Heart right ventricle (tissue), 16 donors: ENCODE measurements at regions of chr18 and their contacts with region 1.

Region 1: DNA sequence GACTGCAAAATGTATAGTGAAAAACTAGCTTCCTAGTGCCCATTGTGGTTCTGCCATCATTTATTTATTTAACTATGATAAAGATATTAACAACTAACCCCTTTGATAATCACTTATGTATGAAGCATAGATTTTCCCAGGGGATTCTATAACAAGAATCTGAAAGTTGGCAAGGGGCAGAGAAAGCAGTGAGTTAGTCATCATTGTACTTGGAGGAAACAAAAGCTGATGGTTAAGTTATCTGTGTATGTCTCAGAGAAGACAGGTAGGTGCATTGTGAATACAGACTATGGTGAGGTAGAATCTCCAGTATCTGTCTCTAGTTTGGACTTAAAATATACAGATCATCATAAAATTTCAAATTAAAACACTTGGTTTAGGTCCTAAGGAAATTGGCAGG is 2159.1 kb upstream of the CELF4 start:
- DNase-seq: no peak
- ATAC-seq: no peak
- H3K4me3 ChIP-seq: no peak overlapping the region
- H3K27ac ChIP-seq: no peak overlapping the region
- H3K4me1 ChIP-seq: no peaks in the 10 kb centered on the region
- H3K27me3 ChIP-seq: no peaks in the 10 kb centered on the region
- CTCF ChIP-seq: no peak

Region 2: GRCh38 chr18:39660141-39660540 is 64.5 kb before region 1 on chr18:
- intact Hi-C with region 1: loop called in 1 of 10 experiments (anchors 10 kb)
- DNase-seq: no peak
- ATAC-seq: no peak
- H3K4me3 ChIP-seq: no peak overlapping the region
- H3K27ac ChIP-seq: no peak overlapping the region
- H3K4me1 ChIP-seq: no peaks in the 10 kb centered on the region
- H3K27me3 ChIP-seq: no peaks in the 10 kb centered on the region
- CTCF ChIP-seq: no peak

Region 3: DNA sequence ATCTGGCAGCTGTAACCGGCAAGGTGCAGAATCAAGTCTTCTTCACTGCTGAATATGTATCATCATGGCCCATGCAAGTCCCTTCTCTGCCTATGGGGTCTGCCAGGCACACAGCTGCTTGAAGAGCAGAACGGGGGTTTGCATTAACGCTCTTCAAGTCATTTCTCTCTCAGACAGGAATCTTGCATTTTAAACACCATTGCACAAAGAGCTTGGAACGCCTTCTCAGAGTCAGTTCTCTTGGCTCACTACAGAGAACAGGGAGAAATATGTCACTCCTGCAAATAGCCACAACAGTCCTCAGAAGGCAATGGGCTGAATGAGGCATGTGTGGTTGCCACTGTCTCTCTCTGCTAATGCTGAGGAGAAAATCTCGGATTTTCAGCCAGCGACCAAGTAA is 56.9 kb after region 1 on chr18:
- intact Hi-C with region 1: no loop called
- DNase-seq: no peak
- ATAC-seq: no peak
- H3K4me3 ChIP-seq: no peak overlapping the region
- H3K27ac ChIP-seq: no peak overlapping the region
- H3K4me1 ChIP-seq: no peaks in the 10 kb centered on the region
- H3K27me3 ChIP-seq: peaks cover 0 to 6% (median 0%) of the 10 kb centered on the region in 7 donors
- CTCF ChIP-seq: no peak